GM12878 (cell line): ENCODE measurements at regions of chr14 and their contacts with region 1.

Region 1: GRCh38 chr14:22386924-22387775 is 201.9 kb downstream of the DAD1 start:
- DNase-seq: peak; percentile 77
- ATAC-seq: peak; percentile 18
- H3K4me3 ChIP-seq: no peak overlapping the region
- H3K27ac ChIP-seq: no peak overlapping the region
- H3K4me1 ChIP-seq: peaks cover 69% of the 10 kb centered on the region
- H3K27me3 ChIP-seq: no peaks in the 10 kb centered on the region
- CTCF ChIP-seq: peak; percentile 67 to 87 (median 79)
- EP300 ChIP-seq: no peak
- POLR2A ChIP-seq: no peak
- RAD21 ChIP-seq: peak; percentile 98

Region 2: DNA sequence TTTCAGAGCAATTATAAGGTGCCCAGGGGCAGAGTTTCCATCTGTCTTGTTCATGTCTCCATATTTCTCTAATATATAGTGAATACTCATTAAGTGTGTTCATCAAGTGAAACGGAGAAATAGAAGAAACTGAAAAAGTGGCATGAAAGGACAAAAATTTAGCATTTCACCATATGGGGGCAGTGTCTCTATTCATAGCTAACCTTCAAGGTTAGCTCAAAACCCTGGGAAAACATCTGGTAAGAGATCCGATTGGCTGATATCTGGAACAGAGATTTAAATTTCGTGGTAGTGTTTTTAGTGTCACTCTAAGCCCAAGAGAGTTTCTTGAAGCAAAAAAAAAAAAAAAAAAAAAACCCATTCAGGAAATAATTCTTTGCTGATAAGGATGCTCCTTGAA is 165.6 kb before region 1 on chr14:
- CTCF ChIA-PET with region 1: interaction called, 15 read pairs
- POLR2A ChIA-PET with region 1: no interaction called
- RAD21 ChIA-PET with region 1: interaction called, 4 read pairs
- SMC1A ChIA-PET with region 1: interaction called, 8 read pairs
- in situ Hi-C with region 1: no loop called
- intact Hi-C with region 1: no loop called
- DNase-seq: no peak
- ATAC-seq: peak; percentile 58
- H3K4me3 ChIP-seq: no peak overlapping the region
- H3K27ac ChIP-seq: no peak overlapping the region
- H3K4me1 ChIP-seq: no peaks in the 10 kb centered on the region
- H3K27me3 ChIP-seq: no peaks in the 10 kb centered on the region; a peak in 2 of 4 replicates
- CTCF ChIP-seq: peak; percentile 31 to 49 (median 43); a peak in 4 of 6 replicates
- EP300 ChIP-seq: no peak
- POLR2A ChIP-seq: no peak
- RAD21 ChIP-seq: peak; percentile 25; the same call in 1 of the 2 replicates

Region 3: DNA sequence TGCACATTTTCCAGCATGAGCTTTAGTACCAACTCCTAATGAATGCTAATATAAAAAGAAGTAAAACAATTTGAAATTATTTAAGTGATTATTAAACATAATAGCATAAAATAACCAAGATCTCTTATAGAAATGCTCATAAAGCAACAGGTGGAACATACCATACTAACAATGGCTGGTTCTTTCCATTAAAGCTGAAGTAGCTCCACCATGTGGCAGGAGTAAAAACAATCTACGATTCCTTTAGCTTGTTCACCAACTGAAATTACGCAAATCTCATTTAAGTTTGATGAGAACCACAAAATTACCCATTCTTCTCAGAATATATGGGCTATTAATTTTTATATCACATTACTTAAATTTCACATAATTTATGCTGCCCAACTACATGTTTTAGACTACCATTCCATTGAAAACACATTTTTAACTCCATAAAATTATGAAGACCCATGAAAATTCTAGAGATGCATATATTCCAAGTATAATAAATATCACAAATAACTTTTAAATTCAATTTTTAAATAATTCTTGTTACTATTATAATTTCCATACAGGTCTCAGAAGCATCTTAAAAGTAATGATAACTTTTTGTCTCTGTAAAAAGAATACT is 11.7 kb before region 1 on chr14:
- CTCF ChIA-PET with region 1: interaction called, 37 read pairs
- POLR2A ChIA-PET with region 1: interaction called, 3 read pairs
- RAD21 ChIA-PET with region 1: interaction called, 17 read pairs
- SMC1A ChIA-PET with region 1: interaction called, 30 read pairs
- in situ Hi-C with region 1: no loop called
- intact Hi-C with region 1: no loop called
- DNase-seq: no peak
- ATAC-seq: peak; percentile 75
- H3K4me3 ChIP-seq: no peak overlapping the region
- H3K27ac ChIP-seq: no peak overlapping the region
- H3K4me1 ChIP-seq: no peaks in the 10 kb centered on the region
- H3K27me3 ChIP-seq: no peaks in the 10 kb centered on the region
- CTCF ChIP-seq: peak; percentile 50 to 60 (median 50)
- EP300 ChIP-seq: no peak
- POLR2A ChIP-seq: no peak
- RAD21 ChIP-seq: peak; percentile 79

Region 4: DNA sequence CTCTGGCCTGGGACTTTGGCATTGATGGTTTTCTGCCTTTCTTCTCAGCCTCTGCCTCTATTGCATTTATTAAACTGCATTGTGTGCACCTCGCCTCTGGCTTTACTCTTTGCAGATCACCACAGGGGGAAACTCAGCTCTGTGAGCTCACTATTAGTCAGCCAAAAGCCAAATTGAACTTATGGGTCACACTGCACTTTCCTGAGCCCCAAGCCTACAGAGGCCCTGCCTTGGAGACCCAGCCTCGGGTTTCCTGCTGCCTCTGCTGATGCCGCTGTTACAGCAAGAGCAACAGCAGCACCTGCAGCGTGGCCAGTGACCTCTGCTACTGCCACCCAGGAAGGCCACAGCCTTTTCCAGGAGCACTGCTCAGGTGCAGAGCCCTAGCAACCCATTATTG is 79.3 kb after region 1 on chr14:
- CTCF ChIA-PET with region 1: interaction called, 411 read pairs
- POLR2A ChIA-PET with region 1: interaction called, 39 read pairs
- RAD21 ChIA-PET with region 1: interaction called, 272 read pairs
- SMC1A ChIA-PET with region 1: interaction called, 912 read pairs
- in situ Hi-C with region 1: loop called (anchors 5 kb)
- intact Hi-C with region 1: no loop called
- DNase-seq: no peak
- ATAC-seq: peak; percentile 71
- H3K4me3 ChIP-seq: no peak overlapping the region
- H3K27ac ChIP-seq: peak overlapping the region; percentile 86
- H3K4me1 ChIP-seq: peaks cover 52% of the 10 kb centered on the region
- H3K27me3 ChIP-seq: no peaks in the 10 kb centered on the region
- CTCF ChIP-seq: 0 out of 6 replicates have a peak, but pooled peaks of 1 of the 3 experiments have one; percentile 12
- EP300 ChIP-seq: no peak
- POLR2A ChIP-seq: no peak
- RAD21 ChIP-seq: peak; percentile 40; the same call in 1 of the 2 replicates

Region 5: DNA sequence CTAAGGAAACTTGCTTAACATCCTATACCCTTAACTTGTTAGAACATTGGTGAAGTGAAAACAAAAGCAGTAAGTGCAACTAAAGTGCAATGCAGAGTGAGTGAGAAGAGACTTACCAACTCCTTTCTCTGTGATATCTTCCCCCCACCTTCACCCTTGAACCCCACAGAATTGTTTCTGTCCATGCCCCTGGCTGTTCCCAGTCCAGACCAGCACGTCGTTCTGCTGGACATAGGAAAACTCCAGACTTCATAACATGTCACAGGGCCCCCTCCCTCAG is 109.9 kb after region 1 on chr14:
- CTCF ChIA-PET with region 1: interaction called, 5 read pairs
- POLR2A ChIA-PET with region 1: interaction called, 11 read pairs
- RAD21 ChIA-PET with region 1: interaction called, 13 read pairs
- SMC1A ChIA-PET with region 1: interaction called, 16 read pairs
- in situ Hi-C with region 1: no loop called
- intact Hi-C with region 1: no loop called
- DNase-seq: no peak
- ATAC-seq: peak; percentile 18
- H3K4me3 ChIP-seq: 0 out of 2 replicates have a peak overlapping the region, but pooled peaks have one; percentile 35
- H3K27ac ChIP-seq: peak overlapping the region; percentile 65
- H3K4me1 ChIP-seq: peaks cover 62% of the 10 kb centered on the region
- H3K27me3 ChIP-seq: no peaks in the 10 kb centered on the region
- CTCF ChIP-seq: no peak
- EP300 ChIP-seq: no peak
- POLR2A ChIP-seq: no peak
- RAD21 ChIP-seq: no peak

Region 6: DNA sequence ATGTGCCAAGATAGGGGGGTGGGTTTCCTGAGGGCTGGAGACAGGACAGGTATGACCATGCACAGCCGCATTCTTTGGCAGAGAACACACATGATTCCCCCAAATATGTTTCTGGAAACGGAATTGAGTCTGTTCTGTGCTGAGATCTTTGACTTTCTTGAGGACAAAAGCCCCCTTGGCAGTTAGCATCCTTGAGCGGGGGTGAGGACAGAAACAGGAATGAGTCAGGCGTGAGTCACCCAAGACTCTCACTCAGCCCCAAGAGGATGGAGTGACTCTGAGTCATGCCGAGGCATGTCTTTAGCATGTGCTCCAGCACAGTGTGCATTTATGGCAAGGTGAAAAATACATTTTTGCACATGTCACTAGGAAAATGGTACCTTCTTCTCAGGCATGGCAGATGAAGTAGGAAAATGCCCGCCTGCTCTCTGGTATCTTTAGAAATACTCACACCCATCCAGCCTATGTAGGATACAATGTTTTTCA is 149.7 kb after region 1 on chr14:
- CTCF ChIA-PET with region 1: interaction called, 4 read pairs
- POLR2A ChIA-PET with region 1: interaction called, 14 read pairs
- RAD21 ChIA-PET with region 1: interaction called, 7 read pairs
- SMC1A ChIA-PET with region 1: interaction called, 23 read pairs
- in situ Hi-C with region 1: no loop called
- intact Hi-C with region 1: no loop called
- DNase-seq: peak; percentile 94
- ATAC-seq: peak; percentile 75
- H3K4me3 ChIP-seq: peak overlapping the region; percentile 41; the same call in 1 of the 2 replicates
- H3K27ac ChIP-seq: peak overlapping the region; percentile 97
- H3K4me1 ChIP-seq: peaks cover 73% of the 10 kb centered on the region
- H3K27me3 ChIP-seq: no peaks in the 10 kb centered on the region
- CTCF ChIP-seq: no peak
- EP300 ChIP-seq: peak; percentile 75 to 82; a peak in 3 of 4 replicates
- POLR2A ChIP-seq: peak; percentile 59
- RAD21 ChIP-seq: peak; percentile 35; the same call in 1 of the 2 replicates

Region 7: GRCh38 chr14:22986508-22987054 is 599.4 kb after region 1 on chr14:
- CTCF ChIA-PET with region 1: interaction called, 6 read pairs
- POLR2A ChIA-PET with region 1: no interaction called
- RAD21 ChIA-PET with region 1: no interaction called
- SMC1A ChIA-PET with region 1: no interaction called
- in situ Hi-C with region 1: no loop called
- intact Hi-C with region 1: loop called (anchors 10 kb)
- DNase-seq: no peak
- ATAC-seq: peak; percentile 90
- H3K4me3 ChIP-seq: no peak overlapping the region
- H3K27ac ChIP-seq: no peak overlapping the region
- H3K4me1 ChIP-seq: no peaks in the 10 kb centered on the region; the same call in 1 of the 2 replicates
- H3K27me3 ChIP-seq: peaks cover 3% of the 10 kb centered on the region in 2 experiments
- CTCF ChIP-seq: peak; percentile 85 to 94 (median 93)
- EP300 ChIP-seq: no peak
- POLR2A ChIP-seq: no peak
- RAD21 ChIP-seq: peak; percentile 95